Gastrocnemius medialis (tissue), 4 donors: ENCODE measurements at regions of chrX and their contacts with region 1.

Region 1: GRCh38 chrX:135003876-135004623 is 13.3 kb downstream of the SMIM10 start:
- DNase-seq: peak; percentile 66 to 84
- ATAC-seq: peak; percentile 96 to 98
- H3K4me3 ChIP-seq: peak overlapping the region; percentile 48 to 65 (median 54)
- H3K27ac ChIP-seq: peak overlapping the region; percentile 26 to 63 (median 55)
- H3K4me1 ChIP-seq: peaks cover 0 to 3% of the 10 kb centered on the region in 2 donors
- H3K27me3 ChIP-seq: no peaks in the 10 kb centered on the region
- CTCF ChIP-seq: no peak
- POLR2A ChIP-seq: no peak

Region 2: DNA sequence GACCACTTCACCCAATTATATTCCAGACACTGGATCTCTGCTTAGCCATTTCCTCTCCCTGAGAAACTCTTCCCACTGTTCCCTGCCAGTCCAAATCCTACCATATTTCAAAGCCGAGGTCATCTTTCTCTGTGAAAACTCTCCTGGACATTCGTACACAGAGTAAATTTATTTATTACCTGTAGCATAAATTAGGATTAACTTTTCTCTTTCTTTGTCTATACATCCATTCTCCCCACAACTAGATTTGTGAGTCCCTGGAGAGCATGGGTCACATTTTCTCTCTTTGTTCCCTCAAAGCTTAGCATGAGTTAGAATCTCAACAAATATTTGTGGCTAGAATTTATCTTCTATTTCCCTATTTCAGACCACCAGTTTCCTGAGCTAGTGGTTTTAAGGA is 41.0 kb before region 1 on chrX:
- in situ Hi-C with region 1: loop called in 1 of 4 experiments (anchors 5 kb)
- intact Hi-C with region 1: loop called (anchors 1 kb)
- DNase-seq: no peak
- ATAC-seq: no peak
- H3K4me3 ChIP-seq: no peak overlapping the region
- H3K27ac ChIP-seq: no peak overlapping the region
- H3K4me1 ChIP-seq: no peaks in the 10 kb centered on the region
- H3K27me3 ChIP-seq: no peaks in the 10 kb centered on the region
- CTCF ChIP-seq: no peak
- POLR2A ChIP-seq: no peak

Region 3: DNA sequence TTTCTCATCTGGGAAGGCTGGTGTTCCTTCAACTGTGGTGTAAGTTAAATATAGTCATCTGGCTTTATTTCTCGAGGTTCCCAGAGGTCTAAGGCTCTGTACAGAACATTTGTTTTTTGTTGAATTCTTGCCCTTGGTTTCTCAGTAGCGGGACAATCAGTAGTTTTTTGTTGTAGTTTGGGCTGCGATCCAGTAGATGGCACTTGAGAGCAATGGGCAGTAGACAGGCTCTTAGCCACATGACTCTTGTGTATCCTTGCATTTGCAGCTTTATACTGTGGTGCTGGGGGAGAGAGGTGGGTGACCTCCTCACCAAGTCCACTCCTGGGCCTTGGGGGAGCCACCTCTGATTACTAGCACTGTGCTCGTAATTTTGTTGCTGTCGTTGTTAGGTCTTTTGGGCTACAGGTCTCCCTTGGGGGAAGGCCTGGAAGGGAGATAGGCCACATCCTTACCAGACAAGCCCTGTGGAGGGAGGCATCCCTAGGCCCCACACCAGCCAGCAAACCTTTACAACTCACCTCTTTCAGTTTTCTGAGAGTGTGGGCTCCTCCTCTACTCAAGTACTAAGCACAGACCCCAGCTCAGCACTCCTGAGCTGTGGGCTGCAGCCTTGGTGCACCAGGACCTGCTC is 108.2 kb after region 1 on chrX:
- in situ Hi-C with region 1: no loop called
- intact Hi-C with region 1: no loop called
- DNase-seq: no peak
- ATAC-seq: no peak
- H3K4me3 ChIP-seq: no peak overlapping the region
- H3K27ac ChIP-seq: no peak overlapping the region
- H3K4me1 ChIP-seq: no peaks in the 10 kb centered on the region
- H3K27me3 ChIP-seq: no peaks in the 10 kb centered on the region
- CTCF ChIP-seq: peak in 4 of 5 experiments; percentile 16 to 56 (median 34)
- POLR2A ChIP-seq: no peak